PC-9 (cell line): ENCODE measurements at regions of chr7 and their contacts with region 1.

Region 1: DNA sequence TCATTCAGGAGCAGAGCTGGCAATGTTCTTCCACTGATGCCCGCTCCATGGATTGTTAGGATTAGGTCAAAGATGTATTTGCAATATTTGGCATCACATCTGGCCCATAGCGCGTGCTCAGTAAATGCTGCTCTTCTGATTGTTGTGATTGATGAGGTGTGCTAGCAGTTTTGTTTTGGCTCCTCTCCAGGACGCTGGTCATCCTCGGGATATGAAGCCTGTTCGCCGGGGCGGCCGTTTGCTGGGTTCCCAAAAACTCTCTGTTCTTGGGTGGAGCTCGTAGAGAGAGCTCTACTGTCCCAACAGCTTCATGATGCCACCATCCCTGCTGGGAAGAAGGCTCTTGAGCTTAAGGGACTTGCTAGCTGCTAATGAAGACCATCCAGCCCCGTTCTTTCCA is 96.9 kb downstream of the XRCC2 start:
- DNase-seq: no peak
- H3K4me3 ChIP-seq: no peak overlapping the region
- H3K27ac ChIP-seq: no peak overlapping the region
- H3K4me1 ChIP-seq: no peaks in the 10 kb centered on the region
- H3K27me3 ChIP-seq: no peaks in the 10 kb centered on the region
- CTCF ChIP-seq: no peak

Region 2: DNA sequence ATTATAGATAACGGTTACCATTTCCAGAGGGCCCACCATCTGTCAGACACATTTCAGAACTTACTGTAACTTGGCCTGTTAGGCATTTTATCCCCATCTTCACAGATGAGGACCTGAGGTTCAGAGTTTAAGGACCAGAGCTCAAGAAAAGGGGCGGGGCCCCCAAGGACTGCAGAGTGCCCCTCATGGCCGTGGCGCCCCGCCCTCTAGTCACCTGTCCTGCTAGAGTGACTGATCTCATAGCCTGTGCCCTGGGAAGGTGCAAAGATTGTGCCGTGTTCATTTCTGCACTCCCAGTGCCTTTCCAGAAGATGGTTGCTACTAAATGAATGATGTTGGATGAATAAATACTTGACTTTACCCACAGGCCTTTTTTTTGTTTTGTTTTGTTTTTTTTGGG is 10.1 kb before region 1 on chr7:
- CTCF ChIA-PET with region 1: no interaction called
- POLR2A ChIA-PET with region 1: no interaction called
- intact Hi-C with region 1: no loop called
- DNase-seq: no peak
- H3K4me3 ChIP-seq: no peak overlapping the region
- H3K27ac ChIP-seq: no peak overlapping the region
- H3K4me1 ChIP-seq: no peaks in the 10 kb centered on the region
- H3K27me3 ChIP-seq: no peaks in the 10 kb centered on the region
- CTCF ChIP-seq: no peak

Region 3: GRCh38 chr7:152666085-152666484 is 87.0 kb after region 1 on chr7:
- CTCF ChIA-PET with region 1: no interaction called
- POLR2A ChIA-PET with region 1: interaction called, 13 read pairs
- intact Hi-C with region 1: no loop called
- DNase-seq: no peak
- H3K4me3 ChIP-seq: no peak overlapping the region
- H3K27ac ChIP-seq: no peak overlapping the region
- H3K4me1 ChIP-seq: no peaks in the 10 kb centered on the region
- H3K27me3 ChIP-seq: no peaks in the 10 kb centered on the region
- CTCF ChIP-seq: no peak